ENCODE measurements at regions of chr5 and their contacts with region 1.

Region 1: DNA sequence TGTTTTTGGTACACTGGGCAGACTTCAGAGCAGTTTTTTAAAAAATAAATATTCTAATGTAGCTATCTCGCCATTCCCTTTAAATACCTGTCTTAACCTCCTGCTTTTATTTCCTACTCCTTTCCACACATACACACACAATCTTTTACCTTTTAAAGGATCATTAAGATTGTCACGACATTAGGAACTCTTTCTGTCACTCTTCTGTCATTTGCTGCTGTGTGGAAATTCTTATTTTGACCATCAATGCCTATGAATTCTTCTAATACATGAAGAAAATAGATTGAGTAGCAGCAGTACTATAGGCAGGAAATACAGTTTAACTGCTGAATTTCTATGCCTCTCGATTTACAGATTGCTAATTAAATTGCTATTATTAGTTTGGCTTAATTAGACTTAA is 1.8 kb downstream of the PPP1R2B start:
- DNase-seq: no peak
- H3K4me3 ChIP-seq: no peak overlapping the region
- H3K4me3 Mint-ChIP-seq: no peak overlapping the region
- H3K27ac ChIP-seq: no peak overlapping the region
- H3K27ac Mint-ChIP-seq: no peak overlapping the region
- H3K4me1 ChIP-seq: no peaks in the 10 kb centered on the region
- H3K4me1 Mint-ChIP-seq: no peaks in the 10 kb centered on the region
- H3K27me3 ChIP-seq: no peaks in the 10 kb centered on the region
- H3K27me3 Mint-ChIP-seq: peaks cover 20 to 22% of the 10 kb centered on the region in 2 donors

Region 2: DNA sequence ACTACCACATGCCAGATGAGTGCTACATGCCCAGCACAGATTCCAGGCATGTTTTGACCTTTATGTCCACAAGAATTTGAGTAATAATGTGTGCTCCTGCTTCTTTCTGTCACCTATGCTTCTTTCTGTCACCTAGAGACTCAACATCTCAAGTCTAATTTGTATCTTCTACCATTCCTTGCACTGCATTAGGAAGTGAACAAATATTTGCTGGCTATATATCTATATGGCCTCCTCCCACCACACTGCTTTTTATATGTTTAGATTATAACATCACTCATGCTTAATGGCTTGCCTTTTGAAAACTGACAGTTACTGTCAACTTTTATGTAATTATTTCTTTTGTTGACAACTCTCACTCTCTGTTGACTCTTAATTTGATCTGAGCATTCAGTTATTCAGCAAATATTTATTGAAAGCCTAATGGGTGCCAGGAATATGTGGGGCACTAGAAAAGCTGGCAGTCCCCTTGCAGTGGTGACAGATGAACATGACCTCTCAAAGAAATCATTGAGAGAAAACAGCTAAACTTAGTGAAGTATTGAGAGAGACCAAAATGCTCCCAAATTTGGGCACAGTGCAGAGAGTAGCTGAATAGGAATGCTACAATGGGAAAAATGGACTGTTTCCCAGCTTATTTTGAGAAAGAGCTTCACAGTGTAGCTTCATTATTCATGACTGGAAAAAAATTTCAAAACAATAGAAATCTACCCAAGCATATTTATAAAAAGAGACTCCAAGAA is 267.2 kb before region 1 on chr5:
- CTCF ChIA-PET with region 1: no interaction called
- POLR2A ChIA-PET with region 1: no interaction called
- intact Hi-C with region 1: no loop called
- DNase-seq: no peak
- H3K4me3 ChIP-seq: no peak overlapping the region
- H3K4me3 Mint-ChIP-seq: no peak overlapping the region
- H3K27ac ChIP-seq: no peak overlapping the region
- H3K27ac Mint-ChIP-seq: no peak overlapping the region
- H3K4me1 ChIP-seq: no peaks in the 10 kb centered on the region
- H3K4me1 Mint-ChIP-seq: no peaks in the 10 kb centered on the region
- H3K27me3 ChIP-seq: no peaks in the 10 kb centered on the region
- H3K27me3 Mint-ChIP-seq: peaks cover 10 to 21% of the 10 kb centered on the region in 2 donors

Region 3: DNA sequence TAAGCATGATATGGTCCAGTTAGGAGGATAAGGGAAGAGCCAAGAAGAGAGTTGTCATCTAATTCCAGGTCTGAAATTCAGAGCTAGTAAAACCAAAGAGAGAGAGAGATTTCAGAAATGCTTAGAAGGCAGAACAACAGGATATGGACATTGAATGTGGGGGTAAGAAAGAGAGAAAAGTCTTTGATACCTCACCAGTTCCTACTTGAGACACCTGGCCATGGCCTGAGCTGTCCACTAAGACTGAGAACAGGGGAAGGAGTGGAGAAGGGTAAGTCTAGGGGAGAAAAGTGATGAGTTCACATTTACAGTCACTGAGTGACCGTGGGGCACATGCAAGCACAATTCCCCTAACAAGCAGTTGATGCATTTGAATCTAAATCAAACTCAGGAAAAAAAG is 75.7 kb after region 1 on chr5:
- CTCF ChIA-PET with region 1: no interaction called
- POLR2A ChIA-PET with region 1: no interaction called
- intact Hi-C with region 1: loop called (anchors 2 kb)
- DNase-seq: no peak
- H3K4me3 ChIP-seq: no peak overlapping the region
- H3K4me3 Mint-ChIP-seq: peak overlapping the region in 1 of 8 donors; percentile 7
- H3K27ac ChIP-seq: no peak overlapping the region
- H3K27ac Mint-ChIP-seq: peak overlapping the region in 4 of 7 donors; percentile 29 to 76 (median 62)
- H3K4me1 ChIP-seq: peaks cover 13% of the 10 kb centered on the region
- H3K4me1 Mint-ChIP-seq: peaks cover 12 to 51% (median 30%) of the 10 kb centered on the region in 4 donors
- H3K27me3 ChIP-seq: no peaks in the 10 kb centered on the region
- H3K27me3 Mint-ChIP-seq: no peaks in the 10 kb centered on the region

Measured in CD4-positive, alpha-beta memory T cell (primary cell).